ENCODE measurements at regions of chr11 and their contacts with region 1.

Region 1: GRCh38 chr11:130737866-130738431 is 178.3 kb downstream of the SNX19 start:
- DNase-seq: peak; percentile 82
- ATAC-seq: peak; percentile 97

Region 2: DNA sequence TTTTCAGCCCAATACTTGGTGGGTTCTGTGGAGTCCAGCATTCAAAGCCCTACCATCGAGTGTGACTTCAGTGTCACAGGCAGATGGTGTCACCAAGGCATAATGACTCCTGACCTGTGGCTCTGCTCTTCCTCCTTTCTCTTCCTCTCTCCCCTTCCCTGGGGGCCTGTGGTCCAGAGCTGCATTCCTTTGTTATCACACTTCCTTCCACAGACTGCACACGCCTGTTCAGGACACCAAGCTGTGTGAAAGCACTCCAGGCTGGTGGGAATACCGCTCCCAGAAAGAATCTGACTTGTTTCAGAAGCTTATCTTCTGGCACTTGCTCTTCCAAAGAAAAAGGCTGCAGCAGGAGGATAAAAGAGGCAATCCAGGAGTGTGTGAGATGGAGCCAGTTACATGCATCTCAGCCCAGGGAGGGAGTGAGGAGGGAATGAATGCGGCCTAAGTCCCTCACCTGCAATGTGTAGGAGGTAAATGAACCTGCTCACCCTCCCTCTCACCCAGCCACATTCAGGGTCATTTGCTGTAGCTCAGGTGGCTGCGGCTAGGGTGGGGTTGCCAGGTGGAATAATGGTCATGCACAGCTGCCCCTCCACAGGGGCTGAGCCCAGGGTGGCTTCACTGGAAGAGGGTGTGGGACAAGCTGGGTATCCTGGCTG is 210.2 kb before region 1 on chr11:
- intact Hi-C with region 1: loop called (anchors 5 kb)
- DNase-seq: no peak
- ATAC-seq: peak; percentile 60

Region 3: GRCh38 chr11:130839981-130840666 is 102.2 kb after region 1 on chr11:
- intact Hi-C with region 1: loop called (anchors 5 kb)
- DNase-seq: no peak
- ATAC-seq: peak; percentile 91

Region 4: GRCh38 chr11:130891326-130891725 is 153.4 kb after region 1 on chr11:
- intact Hi-C with region 1: no loop called
- DNase-seq: no peak
- ATAC-seq: no peak

Region 5: DNA sequence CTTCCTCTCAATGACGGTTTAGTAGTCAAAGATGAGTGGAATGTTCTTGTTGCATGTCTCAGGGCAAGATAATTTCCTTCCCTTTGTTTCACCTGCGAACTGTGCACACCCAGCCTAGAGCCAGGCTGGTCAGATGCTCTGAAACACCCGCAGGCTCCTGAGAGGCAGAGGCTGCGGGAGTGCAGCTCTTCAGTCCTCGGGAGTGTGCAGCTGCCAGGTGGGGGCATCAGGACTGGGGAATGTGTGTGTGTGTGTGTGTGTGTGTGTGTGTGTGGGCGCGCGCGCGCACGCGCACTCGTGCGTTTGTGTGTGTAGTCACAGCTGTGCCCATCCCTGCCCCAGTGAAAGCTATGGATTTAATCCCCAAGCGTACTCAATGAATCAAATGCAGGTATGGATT is 496.3 kb after region 1 on chr11:
- intact Hi-C with region 1: no loop called
- DNase-seq: no peak
- ATAC-seq: no peak

Measured in Right ventricle myocardium inferior (tissue), 1 donor.